Activated CD4-positive, alpha-beta T cell treated with anti-CD3 and anti-CD28 coated beads for 36 hours (primary cell): ENCODE measurements at regions of chr11 and their contacts with region 1.

Region 1: GRCh38 chr11:83007909-83008580 is 63.7 kb downstream of the RAB30 start:
- DNase-seq: peak; percentile 14
- ATAC-seq: no peak
- H3K4me3 Mint-ChIP-seq: peak overlapping the region; percentile 20
- H3K27ac Mint-ChIP-seq: peak overlapping the region; percentile 63
- H3K4me1 Mint-ChIP-seq: peaks cover 45% of the 10 kb centered on the region
- H3K27me3 Mint-ChIP-seq: no peaks in the 10 kb centered on the region

Region 2: GRCh38 chr11:82900277-82901164 is 107.5 kb before region 1 on chr11 and contains the start of gene PRCP:
- CTCF ChIA-PET with region 1: interaction called, 5 read pairs
- POLR2A ChIA-PET with region 1: interaction called, 11 read pairs
- intact Hi-C with region 1: loop called in 1 of 2 experiments (anchors 2 kb)
- DNase-seq: peak; percentile 97
- ATAC-seq: peak; percentile 85
- H3K4me3 Mint-ChIP-seq: peak within 1 kb of the TSS; percentile 91
- H3K27ac Mint-ChIP-seq: peak within 1 kb of the TSS; percentile 100
- H3K4me1 Mint-ChIP-seq: peaks cover 44% of the 10 kb centered on the region
- H3K27me3 Mint-ChIP-seq: no peaks in the 10 kb centered on the region
- total RNA-seq, gene PRCP: 18.2 to 23.4 TPM

Region 3: DNA sequence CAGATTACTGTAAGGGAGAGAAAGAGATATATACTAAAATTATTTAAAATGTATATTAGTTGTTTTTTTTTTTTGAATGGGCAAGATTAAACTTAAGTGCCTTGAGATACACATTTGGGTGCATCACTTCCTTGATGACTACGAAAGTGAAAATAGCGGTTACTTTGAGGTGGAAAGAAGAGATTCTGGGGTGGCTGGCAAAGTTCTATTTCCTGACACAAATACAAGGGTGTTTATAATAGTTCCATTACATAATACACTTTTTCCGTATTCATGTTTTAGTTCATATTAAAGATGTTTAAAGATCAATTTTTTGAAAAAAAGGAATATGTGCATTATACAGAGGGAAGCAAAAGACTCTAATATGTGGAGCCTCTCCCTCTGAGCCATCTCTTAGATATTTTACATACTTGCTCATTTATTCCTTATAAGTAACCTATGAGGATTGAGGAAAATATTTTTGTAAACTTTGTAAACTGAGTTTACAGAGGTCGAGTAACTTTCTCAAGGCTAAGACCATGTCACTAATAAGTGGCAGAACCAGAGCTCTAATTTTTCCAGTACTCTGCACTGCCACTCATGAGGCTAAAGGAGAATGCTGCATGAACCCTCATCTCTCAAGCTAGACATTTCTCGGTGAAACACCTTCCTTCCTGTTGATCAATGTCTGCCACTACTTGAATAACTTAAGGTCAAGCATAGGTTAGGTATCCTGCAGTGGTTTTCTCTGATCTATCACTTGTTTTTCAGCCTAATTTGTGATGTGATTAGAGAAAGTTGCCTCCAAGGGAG is 47.9 kb before region 1 on chr11:
- CTCF ChIA-PET with region 1: interaction called, 4 read pairs
- POLR2A ChIA-PET with region 1: no interaction called
- intact Hi-C with region 1: loop called in 1 of 2 experiments (anchors 1 kb)
- DNase-seq: peak; percentile 43
- ATAC-seq: peak; percentile 92
- H3K4me3 Mint-ChIP-seq: peak overlapping the region; percentile 12
- H3K27ac Mint-ChIP-seq: peak overlapping the region; percentile 70
- H3K4me1 Mint-ChIP-seq: peaks cover 74% of the 10 kb centered on the region
- H3K27me3 Mint-ChIP-seq: no peaks in the 10 kb centered on the region

Region 4: DNA sequence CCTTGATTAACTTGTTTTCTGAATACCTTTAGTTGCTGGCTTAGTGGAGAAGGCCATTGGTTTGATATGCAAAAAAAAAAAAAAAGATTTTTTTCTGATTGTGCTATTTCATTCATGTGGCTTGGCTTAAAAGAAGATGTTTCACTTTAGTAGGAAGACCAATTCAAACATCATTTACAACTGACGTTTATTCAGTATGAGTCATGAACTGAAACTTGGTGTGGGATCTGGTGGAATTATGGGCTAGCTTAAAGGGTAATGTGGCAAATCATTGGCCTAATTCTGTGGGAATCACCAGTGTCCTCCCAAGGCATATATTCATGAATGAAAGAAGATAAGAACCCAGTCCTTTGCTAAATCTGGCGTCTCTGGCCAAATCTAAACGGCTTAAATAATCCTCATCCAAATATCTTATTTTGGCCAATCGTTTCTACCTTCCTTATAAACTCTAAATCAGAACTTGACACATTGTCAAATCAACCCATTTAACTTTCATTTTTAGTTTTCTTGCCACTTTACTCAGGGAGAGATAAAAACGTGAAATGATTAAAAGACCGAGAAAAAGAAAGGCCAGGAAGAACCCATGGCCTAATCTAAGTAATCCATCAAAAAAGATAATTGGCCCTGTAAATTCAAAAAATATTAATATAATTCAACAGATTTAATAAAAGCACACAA is 29.5 kb before region 1 on chr11:
- CTCF ChIA-PET with region 1: interaction called, 5 read pairs
- POLR2A ChIA-PET with region 1: interaction called, 13 read pairs
- intact Hi-C with region 1: loop called (anchors 1 kb)
- DNase-seq: no peak
- ATAC-seq: peak; percentile 69
- H3K4me3 Mint-ChIP-seq: no peak overlapping the region
- H3K27ac Mint-ChIP-seq: peak overlapping the region; percentile 32
- H3K4me1 Mint-ChIP-seq: peaks cover 40% of the 10 kb centered on the region
- H3K27me3 Mint-ChIP-seq: no peaks in the 10 kb centered on the region

Region 5: GRCh38 chr11:82996966-82997606 is 11.0 kb before region 1 on chr11:
- CTCF ChIA-PET with region 1: interaction called, 5 read pairs
- POLR2A ChIA-PET with region 1: interaction called, 11 read pairs
- intact Hi-C with region 1: loop called (anchors 1 kb)
- DNase-seq: peak; percentile 59
- ATAC-seq: peak; percentile 51
- H3K4me3 Mint-ChIP-seq: no peak overlapping the region
- H3K27ac Mint-ChIP-seq: no peak overlapping the region
- H3K4me1 Mint-ChIP-seq: peaks cover 65% of the 10 kb centered on the region
- H3K27me3 Mint-ChIP-seq: no peaks in the 10 kb centered on the region

Region 6: GRCh38 chr11:83054904-83055380 is 46.9 kb after region 1 on chr11:
- CTCF ChIA-PET with region 1: interaction called, 5 read pairs
- POLR2A ChIA-PET with region 1: interaction called, 3 read pairs
- intact Hi-C with region 1: loop called in 1 of 2 experiments (anchors 5 kb)
- DNase-seq: no peak
- ATAC-seq: no peak
- H3K4me3 Mint-ChIP-seq: no peak overlapping the region
- H3K27ac Mint-ChIP-seq: no peak overlapping the region
- H3K4me1 Mint-ChIP-seq: peaks cover 51% of the 10 kb centered on the region
- H3K27me3 Mint-ChIP-seq: no peaks in the 10 kb centered on the region

Region 7: GRCh38 chr11:83063073-83063754 is 55.2 kb after region 1 on chr11:
- CTCF ChIA-PET with region 1: interaction called, 5 read pairs
- POLR2A ChIA-PET with region 1: no interaction called
- intact Hi-C with region 1: loop called (anchors 2 to 5 kb)
- DNase-seq: no peak
- ATAC-seq: peak; percentile 84
- H3K4me3 Mint-ChIP-seq: peak overlapping the region; percentile 62
- H3K27ac Mint-ChIP-seq: peak overlapping the region; percentile 99
- H3K4me1 Mint-ChIP-seq: peaks cover 64% of the 10 kb centered on the region
- H3K27me3 Mint-ChIP-seq: no peaks in the 10 kb centered on the region

Region 8: GRCh38 chr11:84234011-84234410 is 1226.0 kb after region 1 on chr11:
- CTCF ChIA-PET with region 1: no interaction called
- POLR2A ChIA-PET with region 1: no interaction called
- intact Hi-C with region 1: no loop called
- DNase-seq: no peak
- ATAC-seq: no peak
- H3K4me3 Mint-ChIP-seq: no peak overlapping the region
- H3K27ac Mint-ChIP-seq: no peak overlapping the region
- H3K4me1 Mint-ChIP-seq: no peaks in the 10 kb centered on the region
- H3K27me3 Mint-ChIP-seq: no peaks in the 10 kb centered on the region